Activated B cell treated with CpG ODN at 0.5 μM for 24 hours (primary cell): ENCODE measurements at regions of chr19 and their contacts with region 1.

Region 1: GRCh38 chr19:55476100-55476775 is at the start of gene ZNF628:
- DNase-seq: peak; percentile 97
- ATAC-seq: peak; percentile 90
- H3K4me3 Mint-ChIP-seq: peak within 1 kb of the TSS; percentile 91
- H3K27ac Mint-ChIP-seq: peak within 1 kb of the TSS; percentile 89
- H3K4me1 Mint-ChIP-seq: peaks cover 33% of the 10 kb centered on the region
- H3K27me3 Mint-ChIP-seq: no peaks in the 10 kb centered on the region
- CTCF ChIP-seq: no peak
- total RNA-seq, gene ZNF628: 10.4 and 12.7 TPM in 2 replicates

Region 2: GRCh38 chr19:54448774-54449700 is 1027.2 kb before region 1 on chr19 and contains the start of gene LENG8:
- CTCF ChIA-PET with region 1: no interaction called
- POLR2A ChIA-PET with region 1: interaction called, 3 read pairs
- intact Hi-C with region 1: loop called (anchors 1 kb)
- DNase-seq: peak; percentile 98
- ATAC-seq: peak; percentile 92
- H3K4me3 Mint-ChIP-seq: peak within 1 kb of the TSS; percentile 100
- H3K27ac Mint-ChIP-seq: peak within 1 kb of the TSS; percentile 97
- H3K4me1 Mint-ChIP-seq: peaks cover 49% of the 10 kb centered on the region
- H3K27me3 Mint-ChIP-seq: no peaks in the 10 kb centered on the region
- CTCF ChIP-seq: no peak
- total RNA-seq, gene LENG8: 296 and 363 TPM in 2 replicates

Region 3: GRCh38 chr19:55258828-55259539 is 217.3 kb before region 1 on chr19 and contains the start of gene PPP6R1:
- CTCF ChIA-PET with region 1: no interaction called
- POLR2A ChIA-PET with region 1: interaction called, 20 read pairs
- intact Hi-C with region 1: loop called (anchors 1 kb)
- DNase-seq: peak; percentile 94
- ATAC-seq: peak; percentile 75
- H3K4me3 Mint-ChIP-seq: peak within 1 kb of the TSS; percentile 98
- H3K27ac Mint-ChIP-seq: peak within 1 kb of the TSS; percentile 100
- H3K4me1 Mint-ChIP-seq: peaks cover 52% of the 10 kb centered on the region
- H3K27me3 Mint-ChIP-seq: no peaks in the 10 kb centered on the region
- CTCF ChIP-seq: no peak
- total RNA-seq, gene PPP6R1: 203 and 220 TPM in 2 replicates

Region 4: GRCh38 chr19:55437410-55438075 is 38.7 kb before region 1 on chr19:
- CTCF ChIA-PET with region 1: no interaction called
- POLR2A ChIA-PET with region 1: no interaction called
- intact Hi-C with region 1: no loop called
- DNase-seq: no peak
- ATAC-seq: peak; percentile 59
- H3K4me3 Mint-ChIP-seq: no peak overlapping the region
- H3K27ac Mint-ChIP-seq: no peak overlapping the region
- H3K4me1 Mint-ChIP-seq: peaks cover 14% of the 10 kb centered on the region
- H3K27me3 Mint-ChIP-seq: peaks cover 47% of the 10 kb centered on the region
- CTCF ChIP-seq: no peak

Region 5: DNA sequence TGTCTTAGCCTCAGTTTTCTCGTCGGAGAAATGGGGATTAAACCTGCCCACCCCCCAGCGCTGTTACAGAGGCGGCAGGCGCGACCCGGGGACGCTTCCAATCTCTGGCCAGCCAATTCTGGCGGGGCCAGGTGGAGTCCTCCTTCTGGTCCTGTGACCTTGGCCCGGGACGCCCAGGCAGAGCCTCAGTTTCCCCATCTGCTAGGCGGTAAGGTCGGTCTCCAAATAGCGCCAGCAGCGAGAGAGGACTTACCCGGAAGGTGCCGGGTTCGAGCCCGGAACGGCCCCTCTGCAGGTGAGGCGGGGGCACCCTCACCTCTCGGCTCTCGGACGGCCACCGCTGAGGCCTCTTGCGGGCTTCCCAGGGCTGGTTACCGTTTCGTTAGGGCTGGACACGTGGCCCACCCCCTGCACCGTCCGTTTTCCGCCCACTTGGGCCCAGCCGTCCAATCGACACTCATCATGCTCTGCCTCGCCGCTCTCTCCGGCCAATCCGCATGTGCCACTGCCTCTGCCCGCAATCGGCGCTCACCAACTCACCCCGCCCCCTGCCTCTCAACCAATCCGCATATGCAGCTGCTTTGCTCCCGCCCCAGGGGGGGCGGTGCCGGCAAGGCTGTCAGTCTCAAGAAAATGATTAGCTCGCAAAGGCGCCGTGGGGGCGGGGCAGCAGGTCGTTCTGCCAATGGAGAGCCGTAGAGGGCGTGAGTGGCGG is 14.8 kb before region 1 on chr19 and contains the start of gene ISOC2:
- CTCF ChIA-PET with region 1: interaction called, 20 read pairs
- POLR2A ChIA-PET with region 1: interaction called, 49 read pairs
- intact Hi-C with region 1: loop called (anchors 1 kb)
- DNase-seq: peak; percentile 100
- ATAC-seq: peak; percentile 96
- H3K4me3 Mint-ChIP-seq: peak within 1 kb of the TSS; percentile 89
- H3K27ac Mint-ChIP-seq: peak within 1 kb of the TSS; percentile 82
- H3K4me1 Mint-ChIP-seq: peaks cover 22% of the 10 kb centered on the region
- H3K27me3 Mint-ChIP-seq: no peaks in the 10 kb centered on the region
- CTCF ChIP-seq: no peak
- total RNA-seq, gene ISOC2: 28.7 and 29.0 TPM in 2 replicates

Region 6: DNA sequence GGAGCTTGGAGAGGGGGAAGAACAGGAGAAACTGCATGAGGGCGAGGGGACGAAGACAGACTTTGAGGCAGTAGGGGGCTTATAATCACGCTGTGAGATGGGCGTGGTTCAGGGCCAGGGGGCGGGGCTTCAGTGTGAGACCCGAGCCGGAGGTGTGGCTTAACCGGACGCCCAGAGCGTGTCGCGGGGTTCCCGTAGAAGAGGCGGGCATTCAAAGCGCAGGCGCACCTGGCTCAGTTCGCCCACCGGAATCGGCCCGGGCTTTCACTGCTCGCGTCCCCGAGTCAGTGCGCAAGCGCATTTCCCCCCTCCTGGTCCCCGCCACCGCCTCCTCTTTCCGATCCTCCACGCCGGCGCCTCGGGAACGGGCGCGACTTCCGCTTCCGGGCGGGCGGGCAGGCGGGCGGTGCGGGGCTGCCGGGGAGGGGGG is 129.0 kb after region 1 on chr19:
- CTCF ChIA-PET with region 1: interaction called, 3 read pairs
- POLR2A ChIA-PET with region 1: interaction called, 23 read pairs
- intact Hi-C with region 1: loop called (anchors 1 kb)
- DNase-seq: peak; percentile 94
- ATAC-seq: peak; percentile 76
- H3K4me3 Mint-ChIP-seq: peak overlapping the region; percentile 93
- H3K27ac Mint-ChIP-seq: peak overlapping the region; percentile 94
- H3K4me1 Mint-ChIP-seq: peaks cover 50% of the 10 kb centered on the region
- H3K27me3 Mint-ChIP-seq: no peaks in the 10 kb centered on the region
- CTCF ChIP-seq: no peak

Region 7: GRCh38 chr19:56121180-56122167 is 645.2 kb after region 1 on chr19 and contains the start of gene ZNF787:
- CTCF ChIA-PET with region 1: no interaction called
- POLR2A ChIA-PET with region 1: interaction called, 3 read pairs
- intact Hi-C with region 1: loop called (anchors 2 kb)
- DNase-seq: peak; percentile 99
- ATAC-seq: peak; percentile 87
- H3K4me3 Mint-ChIP-seq: peak within 1 kb of the TSS; percentile 91
- H3K27ac Mint-ChIP-seq: peak within 1 kb of the TSS; percentile 95
- H3K4me1 Mint-ChIP-seq: peaks cover 45% of the 10 kb centered on the region
- H3K27me3 Mint-ChIP-seq: no peaks in the 10 kb centered on the region
- CTCF ChIP-seq: no peak
- total RNA-seq, gene ZNF787: 40.8 and 42.3 TPM in 2 replicates